ENCODE measurements at regions of chr1 and their contacts with region 1.

Region 1: GRCh38 chr1:62841587-62842169 is 57.7 kb downstream of the ATG4C start:
- DNase-seq: no peak
- H3K4me3 ChIP-seq: no peak overlapping the region
- H3K27ac ChIP-seq: no peak overlapping the region
- H3K4me1 ChIP-seq: no peaks in the 10 kb centered on the region
- H3K27me3 ChIP-seq: no peaks in the 10 kb centered on the region
- CTCF ChIP-seq: peak; percentile 55 to 74 (median 68)
- EP300 ChIP-seq: no peak
- POLR2A ChIP-seq: no peak

Region 2: GRCh38 chr1:63024132-63024531 is 182.5 kb after region 1 on chr1:
- in situ Hi-C with region 1: no loop called
- intact Hi-C with region 1: no loop called
- DNase-seq: no peak
- H3K4me3 ChIP-seq: no peak overlapping the region
- H3K27ac ChIP-seq: no peak overlapping the region
- H3K4me1 ChIP-seq: no peaks in the 10 kb centered on the region
- H3K27me3 ChIP-seq: no peaks in the 10 kb centered on the region
- CTCF ChIP-seq: no peak
- EP300 ChIP-seq: no peak
- POLR2A ChIP-seq: no peak

Region 3: GRCh38 chr1:63537940-63538339 is 696.3 kb after region 1 on chr1:
- in situ Hi-C with region 1: loop called in 1 of 4 experiments (anchors 25 kb)
- intact Hi-C with region 1: no loop called
- DNase-seq: no peak
- H3K4me3 ChIP-seq: no peak overlapping the region
- H3K27ac ChIP-seq: no peak overlapping the region
- H3K4me1 ChIP-seq: no peaks in the 10 kb centered on the region
- H3K27me3 ChIP-seq: no peaks in the 10 kb centered on the region
- CTCF ChIP-seq: peak in 4 of 5 experiments; percentile 33 to 46 (median 40)
- EP300 ChIP-seq: no peak
- POLR2A ChIP-seq: no peak